Activated CD8-positive, alpha-beta memory T cell treated with anti-CD3 and anti-CD28 coated beads, Interleukin-2, amount 10 ng/mL, durations not matched to agents 7 days and 5 days (primary cell): ENCODE measurements at regions of chr17 and their contacts with region 1.

Region 1: GRCh38 chr17:74203439-74204240 is at the start of gene RPL38:
- DNase-seq: peak; percentile 97
- ATAC-seq: peak; percentile 92
- H3K4me3 Mint-ChIP-seq: peak within 1 kb of the TSS; percentile 97
- H3K27ac Mint-ChIP-seq: peak within 1 kb of the TSS; percentile 97
- H3K4me1 Mint-ChIP-seq: peaks cover 38% of the 10 kb centered on the region
- H3K27me3 Mint-ChIP-seq: peaks cover 19% of the 10 kb centered on the region
- total RNA-seq, gene RPL38: 921 to 988 TPM

Region 2: GRCh38 chr17:74089869-74090464 is 113.7 kb before region 1 on chr17:
- CTCF ChIA-PET with region 1: interaction called, 17 read pairs
- DNase-seq: peak; percentile 78
- ATAC-seq: no peak
- H3K4me3 Mint-ChIP-seq: no peak overlapping the region
- H3K27ac Mint-ChIP-seq: no peak overlapping the region
- H3K4me1 Mint-ChIP-seq: no peaks in the 10 kb centered on the region
- H3K27me3 Mint-ChIP-seq: peaks cover 20% of the 10 kb centered on the region

Region 3: GRCh38 chr17:74190172-74190571 is 13.5 kb before region 1 on chr17:
- CTCF ChIA-PET with region 1: interaction called, 19 read pairs
- DNase-seq: no peak
- ATAC-seq: peak; percentile 78
- H3K4me3 Mint-ChIP-seq: no peak overlapping the region
- H3K27ac Mint-ChIP-seq: no peak overlapping the region
- H3K4me1 Mint-ChIP-seq: peaks cover 6% of the 10 kb centered on the region
- H3K27me3 Mint-ChIP-seq: peaks cover 15% of the 10 kb centered on the region

Region 4: GRCh38 chr17:74325743-74326379 is 122.2 kb after region 1 on chr17 and contains the start of gene KIF19:
- CTCF ChIA-PET with region 1: no interaction called
- DNase-seq: peak; percentile 79
- ATAC-seq: peak; percentile 96
- H3K4me3 Mint-ChIP-seq: peak within 1 kb of the TSS; percentile 36
- H3K27ac Mint-ChIP-seq: no peak within 1 kb of the TSS
- H3K4me1 Mint-ChIP-seq: peaks cover 33% of the 10 kb centered on the region
- H3K27me3 Mint-ChIP-seq: peaks cover 34% of the 10 kb centered on the region
- total RNA-seq, gene KIF19: 0.42 to 1.6 TPM